IMR-90 (cell line): ENCODE measurements at regions of chr15 and their contacts with region 1.

Region 1: DNA sequence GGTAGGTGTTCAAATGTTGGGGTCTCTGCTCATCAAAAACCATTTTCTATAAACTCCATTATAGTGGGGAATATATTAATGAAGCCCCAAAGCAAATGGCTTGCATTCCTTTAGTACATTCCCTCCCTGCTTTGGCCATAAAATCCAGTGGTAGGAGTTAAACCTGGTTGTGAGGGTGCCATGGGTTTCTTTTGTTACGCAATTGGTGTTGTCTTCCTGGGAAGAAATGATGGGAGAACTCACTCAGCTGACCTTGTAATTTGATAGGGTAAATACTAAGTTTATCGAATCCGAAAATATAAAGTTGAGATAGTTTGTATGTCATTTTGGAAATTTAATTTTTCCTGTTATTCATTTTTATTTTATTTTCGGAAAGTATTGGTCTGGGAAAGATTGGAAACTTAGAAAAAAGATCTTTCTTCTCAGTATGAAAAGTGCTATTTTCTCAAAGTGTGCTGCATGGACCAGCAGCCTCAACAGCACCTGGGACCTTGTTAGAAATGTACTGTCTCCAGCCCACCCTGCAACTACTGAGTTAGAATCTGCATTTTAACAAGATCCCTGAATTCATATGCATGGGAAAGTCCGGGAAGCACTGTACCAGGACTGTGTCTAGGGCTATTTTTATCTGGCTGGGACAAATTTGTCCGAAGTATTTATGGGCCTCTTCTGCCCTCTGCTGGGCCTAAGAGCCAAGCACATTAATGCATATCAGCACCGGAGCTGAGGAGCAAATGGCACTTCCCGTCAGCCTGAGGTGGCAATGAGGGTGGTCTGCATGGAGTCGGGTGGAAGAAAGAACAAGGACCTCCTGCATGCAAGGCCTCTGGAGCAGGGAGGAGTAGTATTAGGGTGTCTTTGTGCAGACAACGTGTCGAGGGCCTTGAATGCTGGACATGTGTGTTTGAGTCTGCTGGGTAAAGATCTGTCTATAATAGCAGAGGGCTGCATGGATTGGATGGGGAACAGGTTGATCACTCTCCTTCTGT is 54.7 kb downstream of the FAM81A start:
- DNase-seq: peak; percentile 70
- ATAC-seq: peak; percentile 99
- H3K4me3 ChIP-seq: no peak overlapping the region
- H3K27ac ChIP-seq: no peak overlapping the region
- H3K4me1 ChIP-seq: no peaks in the 10 kb centered on the region
- H3K27me3 ChIP-seq: no peaks in the 10 kb centered on the region; the same call in 1 of the 2 replicates
- CTCF ChIP-seq: peak; percentile 92
- POLR2A ChIP-seq: 0 out of 2 replicates have a peak, but pooled peaks have one; percentile 27
- RAD21 ChIP-seq: peak; percentile 94

Region 2: GRCh38 chr15:58212909-58213526 is 1279.7 kb before region 1 on chr15:
- CTCF ChIA-PET with region 1: no interaction called
- POLR2A ChIA-PET with region 1: no interaction called
- dilution Hi-C with region 1: no loop called
- in situ Hi-C with region 1: loop called (anchors 25 kb)
- intact Hi-C with region 1: no loop called
- DNase-seq: peak; percentile 55
- ATAC-seq: peak; percentile 92
- H3K4me3 ChIP-seq: no peak overlapping the region
- H3K27ac ChIP-seq: no peak overlapping the region
- H3K4me1 ChIP-seq: no peaks in the 10 kb centered on the region
- H3K27me3 ChIP-seq: no peaks in the 10 kb centered on the region
- CTCF ChIP-seq: peak; percentile 62
- POLR2A ChIP-seq: no peak
- RAD21 ChIP-seq: peak; percentile 54

Region 3: GRCh38 chr15:58980351-58980939 is 512.2 kb before region 1 on chr15:
- CTCF ChIA-PET with region 1: no interaction called
- POLR2A ChIA-PET with region 1: no interaction called
- dilution Hi-C with region 1: no loop called
- in situ Hi-C with region 1: loop called (anchors 10 kb)
- intact Hi-C with region 1: loop called (anchors 1 kb)
- DNase-seq: peak; percentile 56
- ATAC-seq: 0 out of 2 replicates have a peak, but pooled peaks have one; percentile 24
- H3K4me3 ChIP-seq: no peak overlapping the region
- H3K27ac ChIP-seq: no peak overlapping the region
- H3K4me1 ChIP-seq: no peaks in the 10 kb centered on the region
- H3K27me3 ChIP-seq: no peaks in the 10 kb centered on the region
- CTCF ChIP-seq: peak; percentile 67
- POLR2A ChIP-seq: no peak
- RAD21 ChIP-seq: peak; percentile 68

Region 4: GRCh38 chr15:59148153-59148833 is 344.4 kb before region 1 on chr15:
- CTCF ChIA-PET with region 1: no interaction called
- POLR2A ChIA-PET with region 1: no interaction called
- dilution Hi-C with region 1: no loop called
- in situ Hi-C with region 1: loop called (anchors 5 kb)
- intact Hi-C with region 1: loop called (anchors 5 kb)
- DNase-seq: peak; percentile 49
- ATAC-seq: peak; percentile 84
- H3K4me3 ChIP-seq: no peak overlapping the region
- H3K27ac ChIP-seq: peak overlapping the region; percentile 34; the same call in 1 of the 2 replicates
- H3K4me1 ChIP-seq: peaks cover 5% of the 10 kb centered on the region
- H3K27me3 ChIP-seq: no peaks in the 10 kb centered on the region
- CTCF ChIP-seq: no peak
- POLR2A ChIP-seq: no peak
- RAD21 ChIP-seq: no peak

Region 5: GRCh38 chr15:59247364-59247763 is 245.3 kb before region 1 on chr15:
- CTCF ChIA-PET with region 1: interaction called, 3 read pairs
- POLR2A ChIA-PET with region 1: no interaction called
- dilution Hi-C with region 1: no loop called
- in situ Hi-C with region 1: loop called (anchors 10 kb)
- intact Hi-C with region 1: loop called (anchors 1 kb)
- DNase-seq: peak; percentile 74
- ATAC-seq: peak; percentile 93
- H3K4me3 ChIP-seq: no peak overlapping the region
- H3K27ac ChIP-seq: no peak overlapping the region
- H3K4me1 ChIP-seq: no peaks in the 10 kb centered on the region
- H3K27me3 ChIP-seq: no peaks in the 10 kb centered on the region
- CTCF ChIP-seq: peak; percentile 59
- POLR2A ChIP-seq: no peak
- RAD21 ChIP-seq: peak; percentile 76

Region 6: GRCh38 chr15:59553879-59554735 is 61.4 kb after region 1 on chr15:
- CTCF ChIA-PET with region 1: no interaction called
- POLR2A ChIA-PET with region 1: no interaction called
- dilution Hi-C with region 1: no loop called
- in situ Hi-C with region 1: no loop called
- intact Hi-C with region 1: no loop called
- DNase-seq: no peak
- ATAC-seq: no peak
- H3K4me3 ChIP-seq: no peak overlapping the region
- H3K27ac ChIP-seq: no peak overlapping the region
- H3K4me1 ChIP-seq: no peaks in the 10 kb centered on the region
- H3K27me3 ChIP-seq: peaks cover 4% of the 10 kb centered on the region
- CTCF ChIP-seq: no peak
- POLR2A ChIP-seq: no peak
- RAD21 ChIP-seq: no peak

Region 7: DNA sequence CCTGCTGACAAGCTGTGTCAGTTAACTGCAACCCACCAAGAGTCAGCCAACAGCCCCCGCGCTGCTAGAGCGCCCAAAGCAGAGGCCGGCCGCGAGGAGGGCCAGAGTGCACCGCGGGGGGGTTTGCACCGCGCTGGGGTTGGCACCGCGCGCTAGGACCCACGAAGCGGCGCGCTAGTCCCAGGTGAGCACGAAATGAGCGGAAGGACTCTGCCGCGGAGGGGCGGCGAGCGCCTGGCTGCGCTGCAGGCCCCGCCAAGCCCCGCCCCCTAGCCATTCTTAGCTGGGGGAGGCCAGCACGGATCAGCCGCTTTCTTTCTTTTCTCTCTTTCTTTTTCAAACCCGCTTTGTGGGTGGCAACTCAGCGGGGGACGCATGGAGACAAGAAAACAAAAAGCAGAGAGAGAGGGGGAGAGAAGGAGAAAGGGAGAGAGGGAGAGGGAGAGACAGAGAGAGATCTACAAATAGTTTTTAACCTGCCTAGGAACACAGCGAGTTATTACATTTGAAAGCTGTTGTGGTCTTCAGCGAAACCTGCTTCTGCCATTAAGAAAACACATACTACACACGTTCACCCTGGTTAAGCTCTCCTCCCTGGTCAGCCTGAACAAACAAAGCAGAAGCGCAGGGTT is 504.5 kb after region 1 on chr15:
- CTCF ChIA-PET with region 1: no interaction called
- POLR2A ChIA-PET with region 1: no interaction called
- dilution Hi-C with region 1: no loop called
- in situ Hi-C with region 1: no loop called
- intact Hi-C with region 1: no loop called
- DNase-seq: no peak
- ATAC-seq: no peak
- H3K4me3 ChIP-seq: no peak overlapping the region
- H3K27ac ChIP-seq: no peak overlapping the region
- H3K4me1 ChIP-seq: no peaks in the 10 kb centered on the region
- H3K27me3 ChIP-seq: peaks cover 94% of the 10 kb centered on the region
- CTCF ChIP-seq: no peak
- POLR2A ChIP-seq: no peak
- RAD21 ChIP-seq: no peak

Region 8: GRCh38 chr15:61309031-61309511 is 1816.4 kb after region 1 on chr15:
- CTCF ChIA-PET with region 1: no interaction called
- POLR2A ChIA-PET with region 1: no interaction called
- dilution Hi-C with region 1: no loop called
- in situ Hi-C with region 1: no loop called
- intact Hi-C with region 1: no loop called
- DNase-seq: no peak
- ATAC-seq: no peak
- H3K4me3 ChIP-seq: no peak overlapping the region
- H3K27ac ChIP-seq: no peak overlapping the region
- H3K4me1 ChIP-seq: no peaks in the 10 kb centered on the region
- H3K27me3 ChIP-seq: no peaks in the 10 kb centered on the region
- CTCF ChIP-seq: no peak
- POLR2A ChIP-seq: no peak
- RAD21 ChIP-seq: no peak